AG04449 (cell line): ENCODE measurements at regions of chr6 and their contacts with region 1.

Region 1: DNA sequence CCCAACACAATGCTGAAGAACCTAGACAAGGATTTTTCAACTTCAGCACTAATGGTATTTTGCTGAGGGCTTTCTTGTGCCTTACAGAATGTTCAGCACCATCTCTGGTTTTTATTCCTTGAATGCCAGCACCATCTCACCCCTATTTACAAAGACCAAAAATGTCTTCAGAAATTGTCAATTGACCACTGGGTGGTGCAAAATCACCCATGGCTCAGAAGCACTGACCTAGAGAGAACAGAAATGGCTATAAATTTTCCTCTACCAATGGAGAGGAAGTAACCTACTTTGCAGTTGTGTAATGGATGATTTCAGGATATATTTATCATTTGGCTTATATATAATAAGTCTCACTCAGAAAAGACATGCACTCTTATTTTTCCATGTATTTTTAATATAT is 431.0 kb upstream of the IRAK1BP1 start:
- DNase-seq: no peak
- H3K4me3 ChIP-seq: no peak overlapping the region
- CTCF ChIP-seq: peak; percentile 17

Region 2: DNA sequence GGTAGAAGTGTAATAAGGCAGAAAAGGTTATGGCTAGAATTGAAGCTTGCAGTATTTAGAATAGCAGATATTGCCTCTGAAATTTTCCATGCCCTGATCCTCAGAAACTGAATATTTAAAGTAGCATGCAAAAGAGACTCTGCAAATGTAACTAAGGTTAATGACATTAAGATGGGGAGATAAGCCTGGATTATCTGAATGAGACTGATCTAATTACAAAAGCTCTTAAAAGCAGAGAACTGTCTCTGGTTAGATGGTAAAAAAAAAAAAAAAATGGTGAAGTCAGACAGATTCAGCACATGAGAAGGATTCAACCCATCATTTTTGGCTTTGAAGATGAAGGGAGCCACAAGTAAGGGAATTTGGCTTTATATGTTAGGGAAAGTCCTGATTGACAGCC is 72.6 kb before region 1 on chr6:
- CTCF ChIA-PET with region 1: no interaction called
- POLR2A ChIA-PET with region 1: no interaction called
- DNase-seq: no peak
- H3K4me3 ChIP-seq: no peak overlapping the region
- CTCF ChIP-seq: no peak

Region 3: DNA sequence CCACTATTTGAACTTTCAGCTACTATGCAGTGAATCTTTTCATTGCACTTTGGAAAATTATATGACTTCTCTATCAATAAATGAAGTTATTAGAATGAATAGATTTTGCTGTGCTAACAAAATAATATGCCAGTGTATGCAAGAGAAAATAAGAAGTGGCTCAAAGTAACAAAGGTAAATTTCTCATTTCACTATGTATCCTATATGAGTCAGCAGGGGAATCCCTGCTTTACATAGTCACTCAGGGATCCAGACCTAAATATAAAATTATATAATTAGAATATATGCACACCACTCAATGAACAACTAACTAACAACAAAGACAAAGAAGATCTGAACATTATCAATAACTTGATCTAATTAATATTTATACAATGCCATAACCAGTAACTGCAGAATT is 40.2 kb after region 1 on chr6:
- CTCF ChIA-PET with region 1: no interaction called
- POLR2A ChIA-PET with region 1: no interaction called
- DNase-seq: no peak
- H3K4me3 ChIP-seq: no peak overlapping the region
- CTCF ChIP-seq: no peak

Region 4: GRCh38 chr6:78810146-78810545 is 373.8 kb after region 1 on chr6:
- CTCF ChIA-PET with region 1: interaction called, 28 read pairs
- POLR2A ChIA-PET with region 1: no interaction called
- DNase-seq: no peak
- H3K4me3 ChIP-seq: no peak overlapping the region
- CTCF ChIP-seq: peak; percentile 77

Region 5: DNA sequence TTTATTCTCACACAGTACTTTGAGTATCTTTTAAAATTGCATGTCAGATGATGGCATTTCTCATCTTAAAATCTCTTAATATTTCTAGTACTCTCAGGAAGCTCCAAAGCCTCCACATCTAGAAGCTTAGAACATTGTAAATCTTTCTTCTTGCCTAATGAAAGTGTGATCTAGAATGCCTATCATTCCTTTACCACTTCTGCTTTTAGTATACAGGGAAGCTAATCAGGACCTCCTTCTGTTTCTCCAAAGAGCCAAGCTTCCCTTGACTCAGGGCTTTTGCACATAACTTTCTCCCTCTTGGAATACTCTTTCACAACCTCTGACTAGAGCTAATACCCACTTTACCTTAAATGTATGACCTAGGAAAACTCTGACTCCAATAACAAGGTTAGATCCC is 1518.5 kb after region 1 on chr6:
- CTCF ChIA-PET with region 1: no interaction called
- POLR2A ChIA-PET with region 1: no interaction called
- DNase-seq: no peak
- H3K4me3 ChIP-seq: no peak overlapping the region
- CTCF ChIP-seq: no peak